ENCODE measurements at regions of chr1 and their contacts with region 1.

Region 1: DNA sequence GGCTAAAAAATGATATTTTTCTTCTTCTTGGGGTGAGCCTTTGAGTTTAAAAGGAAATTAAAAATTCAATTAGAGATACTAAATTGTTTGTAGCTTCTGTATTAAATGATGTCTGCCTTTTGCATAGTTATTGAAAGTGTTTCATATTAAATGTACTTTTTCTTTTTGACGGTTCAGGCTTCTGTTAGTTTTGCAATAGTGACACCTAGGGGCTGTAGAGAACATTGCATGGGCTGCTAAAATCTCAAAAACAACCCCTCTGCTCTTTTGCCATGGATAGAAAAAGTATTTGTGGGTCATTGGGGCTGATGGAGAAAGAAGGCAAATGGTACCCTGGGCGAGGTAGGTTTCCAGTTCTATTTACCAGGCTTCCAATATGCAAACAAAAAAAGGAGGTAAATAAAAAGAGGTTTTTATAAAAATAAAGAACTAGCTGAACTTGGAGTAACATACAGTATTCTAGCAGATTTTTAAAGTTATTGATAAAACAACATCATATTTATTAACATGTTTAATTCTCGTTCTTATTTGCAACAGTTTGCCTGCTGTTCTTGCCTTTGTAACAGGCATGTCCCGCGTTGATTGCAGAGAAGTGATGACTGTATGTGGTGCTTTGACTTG is 115.4 kb upstream of the HOOK1 start:
- DNase-seq: no peak
- ATAC-seq: peak; percentile 49
- H3K4me3 Mint-ChIP-seq: no peak overlapping the region
- H3K27ac Mint-ChIP-seq: peak overlapping the region; percentile 50
- H3K4me1 Mint-ChIP-seq: peaks cover 30% of the 10 kb centered on the region
- H3K27me3 Mint-ChIP-seq: no peaks in the 10 kb centered on the region
- CTCF ChIP-seq: peak; percentile 50

Region 2: GRCh38 chr1:58773406-58773840 is 925.9 kb before region 1 on chr1:
- CTCF ChIA-PET with region 1: interaction called, 12 read pairs
- POLR2A ChIA-PET with region 1: interaction called, 4 read pairs
- intact Hi-C with region 1: no loop called
- DNase-seq: peak; percentile 24
- ATAC-seq: peak; percentile 89
- H3K4me3 Mint-ChIP-seq: no peak overlapping the region
- H3K27ac Mint-ChIP-seq: peak overlapping the region; percentile 73
- H3K4me1 Mint-ChIP-seq: peaks cover 19% of the 10 kb centered on the region
- H3K27me3 Mint-ChIP-seq: peaks cover 6% of the 10 kb centered on the region
- CTCF ChIP-seq: no peak

Region 3: GRCh38 chr1:59007820-59008598 is 691.3 kb before region 1 on chr1:
- CTCF ChIA-PET with region 1: no interaction called
- POLR2A ChIA-PET with region 1: no interaction called
- intact Hi-C with region 1: loop called (anchors 5 kb)
- DNase-seq: no peak
- ATAC-seq: peak; percentile 76
- H3K4me3 Mint-ChIP-seq: peak overlapping the region; percentile 62
- H3K27ac Mint-ChIP-seq: peak overlapping the region; percentile 90
- H3K4me1 Mint-ChIP-seq: peaks cover 82% of the 10 kb centered on the region
- H3K27me3 Mint-ChIP-seq: no peaks in the 10 kb centered on the region
- CTCF ChIP-seq: no peak

Region 4: DNA sequence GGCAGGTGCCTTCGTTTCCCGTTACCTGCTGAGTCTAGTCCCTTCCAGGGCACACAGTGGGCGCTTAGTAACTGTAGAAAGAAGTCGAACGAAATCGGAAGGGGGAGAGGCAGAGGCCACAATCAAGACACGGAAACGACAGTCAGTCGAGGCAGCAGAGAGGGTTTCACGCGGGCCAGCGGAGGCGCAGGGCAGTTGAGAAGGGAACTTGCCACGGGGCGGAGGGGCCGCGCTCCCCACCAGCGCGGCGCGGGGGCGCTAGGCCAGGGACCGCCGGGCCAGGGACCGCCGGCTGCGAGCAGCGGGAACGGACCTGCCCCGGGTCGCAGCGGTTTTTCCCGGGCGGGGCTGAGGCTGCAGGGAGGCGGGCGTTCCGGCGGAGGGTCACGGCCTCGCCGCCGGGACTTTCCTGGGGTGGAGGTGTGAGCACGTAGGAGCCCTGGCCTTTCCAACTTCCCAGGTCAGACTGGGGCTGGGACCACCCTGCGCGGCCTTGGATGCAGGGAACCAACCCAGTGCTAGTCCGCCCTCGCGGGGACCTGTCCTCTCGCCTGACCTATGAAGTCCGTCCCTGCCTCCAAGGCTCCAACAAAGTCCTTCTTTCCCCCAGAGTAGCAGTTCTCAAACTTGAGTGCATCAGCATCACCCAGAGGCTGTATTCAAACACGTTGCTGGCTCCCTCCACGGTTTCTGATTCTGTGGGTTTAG is 552.5 kb before region 1 on chr1:
- CTCF ChIA-PET with region 1: no interaction called
- POLR2A ChIA-PET with region 1: no interaction called
- intact Hi-C with region 1: loop called (anchors 1 kb)
- DNase-seq: peak; percentile 64
- ATAC-seq: peak; percentile 84
- H3K4me3 Mint-ChIP-seq: peak overlapping the region; percentile 85
- H3K27ac Mint-ChIP-seq: peak overlapping the region; percentile 82
- H3K4me1 Mint-ChIP-seq: peaks cover 46% of the 10 kb centered on the region
- H3K27me3 Mint-ChIP-seq: no peaks in the 10 kb centered on the region
- CTCF ChIP-seq: no peak

Region 5: GRCh38 chr1:59296358-59297256 is 402.7 kb before region 1 on chr1 and contains the start of gene FGGY:
- CTCF ChIA-PET with region 1: interaction called, 10 read pairs
- POLR2A ChIA-PET with region 1: interaction called, 10 read pairs
- intact Hi-C with region 1: loop called (anchors 1 kb)
- DNase-seq: peak; percentile 85
- ATAC-seq: peak; percentile 88
- H3K4me3 Mint-ChIP-seq: peak within 1 kb of the TSS; percentile 92
- H3K27ac Mint-ChIP-seq: peak within 1 kb of the TSS; percentile 95
- H3K4me1 Mint-ChIP-seq: peaks cover 48% of the 10 kb centered on the region
- H3K27me3 Mint-ChIP-seq: no peaks in the 10 kb centered on the region
- CTCF ChIP-seq: no peak
- total RNA-seq, gene FGGY: 22.1 and 24.0 TPM in 2 replicates

Region 6: GRCh38 chr1:59947047-59947938 is 248.0 kb after region 1 on chr1:
- CTCF ChIA-PET with region 1: interaction called, 4 read pairs
- POLR2A ChIA-PET with region 1: no interaction called
- intact Hi-C with region 1: loop called (anchors 5 kb)
- DNase-seq: no peak
- ATAC-seq: peak; percentile 73
- H3K4me3 Mint-ChIP-seq: no peak overlapping the region
- H3K27ac Mint-ChIP-seq: no peak overlapping the region
- H3K4me1 Mint-ChIP-seq: no peaks in the 10 kb centered on the region
- H3K27me3 Mint-ChIP-seq: peaks cover 10% of the 10 kb centered on the region
- CTCF ChIP-seq: peak; percentile 64

Region 7: DNA sequence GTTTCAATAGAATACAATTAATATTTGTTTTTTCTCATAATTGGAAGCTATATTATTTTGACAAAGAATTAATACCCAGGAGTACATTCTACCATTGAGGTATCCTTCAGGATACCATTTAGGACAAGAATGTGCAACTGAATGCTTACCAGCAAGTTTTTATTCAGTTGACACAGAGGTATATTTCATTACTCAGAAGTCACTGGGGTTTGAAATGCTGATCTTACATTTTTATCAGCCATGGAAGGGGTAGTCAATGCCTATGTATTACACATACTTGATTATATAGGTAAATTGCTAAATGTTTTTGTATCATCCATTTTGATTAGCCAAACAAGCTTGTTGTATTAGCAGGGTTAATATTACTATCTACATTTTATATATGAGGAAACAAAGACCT is 326.2 kb after region 1 on chr1:
- CTCF ChIA-PET with region 1: no interaction called
- POLR2A ChIA-PET with region 1: no interaction called
- intact Hi-C with region 1: no loop called
- DNase-seq: no peak
- ATAC-seq: no peak
- H3K4me3 Mint-ChIP-seq: no peak overlapping the region
- H3K27ac Mint-ChIP-seq: no peak overlapping the region
- H3K4me1 Mint-ChIP-seq: no peaks in the 10 kb centered on the region
- H3K27me3 Mint-ChIP-seq: peaks cover 10% of the 10 kb centered on the region
- CTCF ChIP-seq: no peak